Mucosa of descending colon (tissue), 3 donors: ENCODE measurements at regions of chr4 and their contacts with region 1.

Region 1: GRCh38 chr4:168319486-168320019 is 1.0 kb upstream of the DDX60 start:
- DNase-seq: no peak
- ATAC-seq: no peak
- H3K4me3 ChIP-seq: no peak overlapping the region
- H3K4me1 ChIP-seq: peaks cover 13% of the 10 kb centered on the region
- CTCF ChIP-seq: no peak

Region 2: GRCh38 chr4:167144605-167145004 is 1174.9 kb before region 1 on chr4:
- intact Hi-C with region 1: no loop called
- DNase-seq: no peak
- ATAC-seq: no peak
- H3K4me3 ChIP-seq: no peak overlapping the region
- H3K4me1 ChIP-seq: no peaks in the 10 kb centered on the region
- CTCF ChIP-seq: no peak

Region 3: GRCh38 chr4:168480931-168481611 is 161.5 kb after region 1 on chr4:
- intact Hi-C with region 1: loop called in 1 of 2 experiments (anchors 10 kb)
- DNase-seq: peak in 1 of 3 donors; percentile 37
- ATAC-seq: peak; percentile 67
- H3K4me3 ChIP-seq: peak overlapping the region; percentile 75
- H3K4me1 ChIP-seq: no peaks in the 10 kb centered on the region
- CTCF ChIP-seq: no peak